Naive thymus-derived CD4-positive, alpha-beta T cell (primary cell): ENCODE measurements at regions of chrX and their contacts with region 1.

Region 1: DNA sequence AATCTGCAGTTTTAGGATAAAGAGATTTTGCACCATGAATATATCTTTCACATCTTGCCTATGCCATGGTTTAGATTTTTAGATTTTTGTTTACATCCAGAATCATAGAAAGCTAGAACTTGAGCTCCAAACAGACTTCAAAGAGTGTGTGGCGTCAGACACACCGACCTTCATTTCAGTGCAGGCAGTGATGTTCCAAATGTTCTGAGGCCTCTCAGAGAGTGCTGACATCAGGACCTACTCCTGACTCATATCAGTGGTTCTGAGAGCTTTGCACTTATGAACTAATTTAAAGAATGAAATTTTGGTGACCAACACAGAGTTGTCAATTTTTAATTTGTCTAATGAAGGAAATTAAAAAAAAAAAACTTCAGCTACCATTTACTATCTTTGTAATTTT is 18.3 kb downstream of the CXCR3 start:
- DNase-seq: no peak
- ATAC-seq: no peak
- H3K4me3 ChIP-seq: no peak overlapping the region
- H3K4me3 Mint-ChIP-seq: no peak overlapping the region
- H3K27ac ChIP-seq: no peak overlapping the region
- H3K27ac Mint-ChIP-seq: peak overlapping the region in 1 of 9 donors; percentile 26
- H3K4me1 ChIP-seq: no peaks in the 10 kb centered on the region
- H3K4me1 Mint-ChIP-seq: peaks cover 0 to 16% (median 0%) of the 10 kb centered on the region in 7 donors
- H3K27me3 ChIP-seq: no peaks in the 10 kb centered on the region
- H3K27me3 Mint-ChIP-seq: no peaks in the 10 kb centered on the region

Region 2: GRCh38 chrX:71579136-71579989 is 20.6 kb before region 1 on chrX:
- CTCF ChIA-PET with region 1: no interaction called
- POLR2A ChIA-PET with region 1: no interaction called
- intact Hi-C with region 1: loop called in 1 of 2 experiments (anchors 2 kb)
- DNase-seq: no peak
- ATAC-seq: no peak
- H3K4me3 ChIP-seq: no peak overlapping the region
- H3K4me3 Mint-ChIP-seq: no peak overlapping the region
- H3K27ac ChIP-seq: no peak overlapping the region
- H3K27ac Mint-ChIP-seq: no peak overlapping the region
- H3K4me1 ChIP-seq: no peaks in the 10 kb centered on the region
- H3K4me1 Mint-ChIP-seq: peaks cover 0 to 6% (median 0%) of the 10 kb centered on the region in 7 donors
- H3K27me3 ChIP-seq: no peaks in the 10 kb centered on the region
- H3K27me3 Mint-ChIP-seq: no peaks in the 10 kb centered on the region